OCI-LY7 (cell line): ENCODE measurements at regions of chr11 and their contacts with region 1.

Region 1: DNA sequence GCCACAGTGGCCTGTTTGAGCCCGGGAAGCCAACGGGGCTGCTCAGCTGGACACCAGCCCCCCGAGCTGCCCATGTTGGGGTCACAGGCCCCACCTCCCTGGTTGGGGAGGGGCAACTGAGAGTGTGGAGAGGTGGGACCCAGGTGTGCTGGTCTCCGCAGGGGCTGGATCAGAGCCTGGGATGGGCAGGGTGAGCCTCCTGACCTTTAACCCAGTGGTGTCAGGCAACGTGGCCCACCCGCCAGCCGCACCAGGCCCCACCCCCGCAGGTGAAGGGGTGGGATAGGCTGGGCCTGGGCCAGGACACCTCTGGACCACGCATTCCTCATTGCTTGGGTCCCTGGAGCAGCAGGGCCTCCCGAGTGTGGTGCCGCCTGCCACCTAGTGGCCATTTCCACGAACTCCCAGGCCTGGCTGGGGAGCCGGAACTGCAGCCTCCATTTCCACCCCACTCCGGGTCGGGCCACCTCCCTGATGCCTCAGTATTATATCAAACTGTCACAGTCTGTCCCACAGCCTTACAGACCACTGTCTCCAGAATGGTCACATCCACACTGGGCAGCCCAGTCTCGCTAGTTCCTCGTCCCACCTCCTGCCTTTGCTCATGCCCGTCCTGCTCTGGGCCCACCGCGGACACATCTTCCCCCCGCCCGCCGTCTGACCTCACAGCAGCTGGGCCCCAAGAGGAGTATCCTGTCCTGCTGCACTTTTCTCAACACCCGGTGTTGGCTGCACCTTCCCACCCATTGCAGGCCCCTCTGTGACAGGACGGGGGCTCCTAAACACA is 13.3 kb upstream of the PPP6R3 start:
- DNase-seq: peak; percentile 78
- H3K4me3 ChIP-seq: no peak overlapping the region
- H3K27ac ChIP-seq: no peak overlapping the region
- H3K4me1 ChIP-seq: peaks cover 5% of the 10 kb centered on the region
- CTCF ChIP-seq: peak; percentile 92

Region 2: DNA sequence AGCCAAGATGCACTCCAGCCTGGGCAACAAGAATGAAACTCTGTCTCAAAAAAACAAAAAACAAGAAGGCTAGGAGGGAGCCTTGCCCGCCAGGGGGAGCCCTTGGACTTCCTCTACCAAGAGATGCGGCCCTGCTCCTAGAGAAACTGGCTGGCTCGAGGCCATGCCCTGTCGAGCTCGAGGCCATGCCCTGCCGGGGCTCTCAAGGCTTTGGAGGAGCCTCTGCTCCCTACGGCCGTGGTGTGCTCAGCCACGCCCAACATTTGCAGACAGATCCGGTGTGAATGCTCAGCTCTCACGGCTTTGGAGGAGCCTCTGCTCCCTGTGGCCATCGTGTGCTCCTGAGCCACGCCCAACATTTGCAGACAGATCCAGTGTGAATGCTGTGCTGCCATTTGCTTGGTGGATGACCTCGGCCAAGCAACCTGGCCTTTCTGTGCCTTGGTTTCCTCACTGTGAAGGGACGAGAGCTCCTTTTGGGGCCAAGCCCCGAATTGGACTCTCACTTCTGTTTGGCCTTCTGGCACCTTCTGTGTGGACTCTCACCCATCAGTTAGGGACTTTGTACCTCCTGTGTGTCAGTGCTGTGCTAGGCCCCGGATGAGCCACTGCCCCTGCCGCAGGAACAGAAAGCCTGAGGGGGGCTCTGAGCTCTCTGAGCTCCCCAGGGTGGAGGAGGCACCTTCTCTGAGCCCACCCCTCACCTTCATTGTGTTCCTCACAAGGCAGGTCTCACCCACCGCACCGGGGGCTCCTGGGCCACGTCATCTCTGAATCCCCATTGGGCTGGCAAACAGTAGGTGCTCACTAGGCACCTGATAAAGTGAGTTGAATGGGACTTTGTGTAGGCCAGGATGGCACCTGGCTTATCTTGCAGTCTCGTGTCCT is 189.5 kb before region 1 on chr11:
- CTCF ChIA-PET with region 1: no interaction called
- POLR2A ChIA-PET with region 1: no interaction called
- intact Hi-C with region 1: loop called (anchors 5 kb)
- DNase-seq: peak; percentile 93
- H3K4me3 ChIP-seq: no peak overlapping the region
- H3K27ac ChIP-seq: no peak overlapping the region
- H3K4me1 ChIP-seq: peaks cover 6% of the 10 kb centered on the region
- CTCF ChIP-seq: peak; percentile 87

Region 3: GRCh38 chr11:68370211-68371111 is 76.7 kb before region 1 on chr11:
- CTCF ChIA-PET with region 1: no interaction called
- POLR2A ChIA-PET with region 1: no interaction called
- intact Hi-C with region 1: loop called (anchors 5 kb)
- DNase-seq: peak; percentile 93
- H3K4me3 ChIP-seq: peak overlapping the region; percentile 55
- H3K27ac ChIP-seq: peak overlapping the region; percentile 91
- H3K4me1 ChIP-seq: peaks cover 41% of the 10 kb centered on the region
- CTCF ChIP-seq: no peak; the same call in 1 of the 2 replicates

Region 4: GRCh38 chr11:68412593-68413475 is 34.4 kb before region 1 on chr11:
- CTCF ChIA-PET with region 1: no interaction called
- POLR2A ChIA-PET with region 1: no interaction called
- intact Hi-C with region 1: loop called (anchors 5 kb)
- DNase-seq: no peak
- H3K4me3 ChIP-seq: no peak overlapping the region
- H3K27ac ChIP-seq: no peak overlapping the region
- H3K4me1 ChIP-seq: no peaks in the 10 kb centered on the region
- CTCF ChIP-seq: no peak

Region 5: DNA sequence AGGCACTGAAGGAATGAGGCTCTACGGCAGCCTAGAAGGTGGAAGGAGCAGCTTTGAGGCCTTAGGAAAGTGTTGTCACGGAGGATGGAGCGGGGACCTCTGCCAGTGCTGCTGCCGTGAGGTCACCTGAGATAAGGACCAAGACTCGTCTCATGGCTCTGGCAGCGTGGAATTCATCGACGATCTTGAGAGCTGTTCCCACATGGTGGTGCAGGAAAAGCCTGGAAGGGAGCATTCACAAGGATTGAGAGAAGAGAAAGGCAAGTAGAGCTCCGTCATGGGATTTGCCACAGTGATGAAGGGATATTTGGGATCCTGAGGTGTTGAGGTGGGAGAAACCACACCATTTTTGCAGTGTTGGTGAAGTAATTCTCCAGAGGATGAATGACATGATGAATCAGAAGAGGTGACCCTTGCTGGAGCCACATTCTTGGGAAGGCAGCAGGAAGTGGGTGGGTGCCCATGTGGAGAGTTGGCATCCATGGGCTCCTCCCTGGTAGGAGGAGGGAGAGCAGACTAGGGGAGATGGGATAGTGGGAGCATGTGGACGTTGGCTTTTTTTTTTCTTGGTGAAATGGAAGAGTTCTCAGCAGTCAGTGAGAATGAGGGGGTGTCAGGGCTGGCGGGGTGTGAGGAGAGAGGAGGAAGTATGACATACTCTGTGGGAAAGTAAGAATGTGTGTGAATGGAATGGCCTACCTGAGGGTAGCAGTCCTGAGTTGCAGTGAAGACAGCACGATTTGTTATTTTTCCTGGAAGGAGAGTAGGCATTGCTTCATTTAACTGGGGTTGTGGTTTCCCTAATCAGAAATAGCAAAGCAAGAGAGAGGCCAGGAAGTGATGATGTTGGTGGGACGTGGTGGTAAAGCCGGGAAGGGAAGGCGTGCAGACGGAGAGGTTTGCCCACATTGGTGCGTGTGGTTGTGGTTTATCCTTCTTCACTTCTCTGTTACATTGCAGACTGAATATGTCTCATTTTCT is 24.4 kb after region 1 on chr11:
- CTCF ChIA-PET with region 1: no interaction called
- POLR2A ChIA-PET with region 1: no interaction called
- intact Hi-C with region 1: no loop called
- DNase-seq: no peak
- H3K4me3 ChIP-seq: no peak overlapping the region
- H3K27ac ChIP-seq: no peak overlapping the region
- H3K4me1 ChIP-seq: peaks cover 31% of the 10 kb centered on the region
- CTCF ChIP-seq: no peak